Heart left ventricle (tissue), 16 donors: ENCODE measurements at regions of chr16 and their contacts with region 1.

Region 1: GRCh38 chr16:19555162-19555937 is at the start of gene VPS35L:
- DNase-seq: peak; percentile 98 to 99 (median 98)
- ATAC-seq: peak; percentile 99 to 100 (median 100)
- H3K4me3 ChIP-seq: peak within 1 kb of the TSS; percentile 58 to 95 (median 72)
- H3K27ac ChIP-seq: peak within 1 kb of the TSS; percentile 52 to 91 (median 86)
- H3K4me1 ChIP-seq: peaks cover 0 to 15% (median 8%) of the 10 kb centered on the region in 12 donors
- H3K27me3 ChIP-seq: no peaks in the 10 kb centered on the region
- CTCF ChIP-seq: peak; percentile 57 to 86 (median 78)
- POLR2A ChIP-seq: peak in 1 of 2 donors; percentile 66
- total RNA-seq, gene VPS35L: 20.6 to 47.3 (median 27.0) TPM

Region 2: GRCh38 chr16:19307587-19308241 is 247.6 kb before region 1 on chr16:
- intact Hi-C with region 1: no loop called
- DNase-seq: no peak
- ATAC-seq: no peak
- H3K4me3 ChIP-seq: no peak overlapping the region
- H3K27ac ChIP-seq: no peak overlapping the region
- H3K4me1 ChIP-seq: no peaks in the 10 kb centered on the region
- H3K27me3 ChIP-seq: peaks cover 0 to 9% (median 0%) of the 10 kb centered on the region in 9 donors
- CTCF ChIP-seq: no peak
- POLR2A ChIP-seq: no peak

Region 3: DNA sequence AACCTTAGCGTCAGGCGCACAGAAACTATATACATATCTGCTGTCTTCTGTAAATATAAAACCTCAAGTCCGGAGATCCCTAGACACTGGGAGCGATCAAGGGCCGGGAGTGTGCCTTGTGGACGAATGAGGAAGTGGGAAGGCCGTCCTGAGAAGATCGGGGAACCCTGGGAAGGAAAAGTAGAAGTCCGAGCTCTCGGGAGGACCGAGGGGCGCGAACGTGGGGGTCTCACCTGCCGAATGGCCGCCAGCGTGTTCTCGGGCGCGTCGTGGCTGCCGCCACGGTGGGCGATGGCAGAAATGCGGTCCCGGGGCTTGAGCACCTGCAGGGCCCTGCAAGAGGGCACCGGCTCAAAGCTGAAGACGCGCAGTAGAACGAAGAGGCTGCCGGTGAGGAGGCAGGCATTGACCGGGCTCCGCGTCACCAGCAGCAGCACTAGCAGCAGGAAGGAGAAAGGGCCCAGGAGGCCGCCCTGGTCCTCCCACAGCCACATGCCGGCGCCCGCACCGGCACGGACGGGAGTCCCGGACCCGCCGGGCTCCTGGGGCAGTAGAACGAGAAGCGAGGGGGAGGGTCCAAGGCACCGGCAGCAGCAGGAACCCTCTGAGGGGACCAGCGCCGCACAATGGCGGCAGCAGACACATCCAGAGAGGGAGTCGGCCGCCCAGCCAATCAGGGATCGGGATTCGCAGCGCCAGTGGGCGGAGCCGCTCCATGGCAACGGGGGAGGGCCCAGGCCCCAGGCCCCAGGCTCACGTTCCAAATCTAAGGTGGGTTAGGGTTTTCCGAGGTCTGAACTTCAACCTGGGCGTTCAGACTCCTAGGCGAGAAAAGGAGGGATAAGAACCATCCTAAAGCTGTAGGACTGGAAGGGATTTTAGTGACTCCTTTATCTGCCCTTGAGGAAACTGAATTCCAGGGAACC is 33.6 kb before region 1 on chr16 and contains the start of gene GDE1:
- intact Hi-C with region 1: loop called in 2 of 10 experiments (anchors 2 to 5 kb)
- DNase-seq: peak; percentile 96 to 97 (median 96)
- ATAC-seq: peak; percentile 88 to 95 (median 92)
- H3K4me3 ChIP-seq: peak within 1 kb of the TSS; percentile 60 to 95 (median 80)
- H3K27ac ChIP-seq: peak within 1 kb of the TSS; percentile 20 to 95 (median 87)
- H3K4me1 ChIP-seq: peaks cover 4 to 69% (median 37%) of the 10 kb centered on the region in 12 donors
- H3K27me3 ChIP-seq: no peaks in the 10 kb centered on the region
- CTCF ChIP-seq: peak in 7 of 12 donors; percentile 17 to 66 (median 43)
- POLR2A ChIP-seq: peak; percentile 42 to 95
- total RNA-seq, gene GDE1: 77.7 to 134 (median 109) TPM

Region 4: GRCh38 chr16:19639986-19640421 is 84.7 kb after region 1 on chr16:
- intact Hi-C with region 1: loop called in 1 of 10 experiments (anchors 10 kb)
- DNase-seq: no peak
- ATAC-seq: peak in 3 of 4 donors; percentile 32 to 49 (median 42)
- H3K4me3 ChIP-seq: no peak overlapping the region
- H3K27ac ChIP-seq: peak overlapping the region in 5 of 12 donors; percentile 16 to 54 (median 26)
- H3K4me1 ChIP-seq: peaks cover 0 to 26% (median 12%) of the 10 kb centered on the region in 12 donors
- H3K27me3 ChIP-seq: no peaks in the 10 kb centered on the region
- CTCF ChIP-seq: no peak
- POLR2A ChIP-seq: no peak

Region 5: GRCh38 chr16:19717771-19718602 is 162.6 kb after region 1 on chr16 and contains the starts of genes IQCK and KNOP1:
- intact Hi-C with region 1: loop called in 1 of 10 experiments (anchors 10 kb)
- DNase-seq: peak; percentile 92 to 94 (median 93)
- ATAC-seq: peak; percentile 93 to 98 (median 98)
- H3K4me3 ChIP-seq: peak within 1 kb of the TSS; percentile 67 to 99 (median 87)
- H3K27ac ChIP-seq: peak within 1 kb of the TSS in 11 of 12 donors; percentile 75 to 94 (median 85)
- H3K4me1 ChIP-seq: peaks cover 0 to 44% (median 35%) of the 10 kb centered on the region in 12 donors
- H3K27me3 ChIP-seq: no peaks in the 10 kb centered on the region
- CTCF ChIP-seq: peak in 2 of 12 donors; percentile 18 to 19
- POLR2A ChIP-seq: peak in 1 of 2 donors; percentile 67
- total RNA-seq, gene IQCK: 5.7 to 17.4 (median 9.0) TPM
- total RNA-seq, gene KNOP1: 6.3 to 11.5 (median 7.9) TPM

Region 6: DNA sequence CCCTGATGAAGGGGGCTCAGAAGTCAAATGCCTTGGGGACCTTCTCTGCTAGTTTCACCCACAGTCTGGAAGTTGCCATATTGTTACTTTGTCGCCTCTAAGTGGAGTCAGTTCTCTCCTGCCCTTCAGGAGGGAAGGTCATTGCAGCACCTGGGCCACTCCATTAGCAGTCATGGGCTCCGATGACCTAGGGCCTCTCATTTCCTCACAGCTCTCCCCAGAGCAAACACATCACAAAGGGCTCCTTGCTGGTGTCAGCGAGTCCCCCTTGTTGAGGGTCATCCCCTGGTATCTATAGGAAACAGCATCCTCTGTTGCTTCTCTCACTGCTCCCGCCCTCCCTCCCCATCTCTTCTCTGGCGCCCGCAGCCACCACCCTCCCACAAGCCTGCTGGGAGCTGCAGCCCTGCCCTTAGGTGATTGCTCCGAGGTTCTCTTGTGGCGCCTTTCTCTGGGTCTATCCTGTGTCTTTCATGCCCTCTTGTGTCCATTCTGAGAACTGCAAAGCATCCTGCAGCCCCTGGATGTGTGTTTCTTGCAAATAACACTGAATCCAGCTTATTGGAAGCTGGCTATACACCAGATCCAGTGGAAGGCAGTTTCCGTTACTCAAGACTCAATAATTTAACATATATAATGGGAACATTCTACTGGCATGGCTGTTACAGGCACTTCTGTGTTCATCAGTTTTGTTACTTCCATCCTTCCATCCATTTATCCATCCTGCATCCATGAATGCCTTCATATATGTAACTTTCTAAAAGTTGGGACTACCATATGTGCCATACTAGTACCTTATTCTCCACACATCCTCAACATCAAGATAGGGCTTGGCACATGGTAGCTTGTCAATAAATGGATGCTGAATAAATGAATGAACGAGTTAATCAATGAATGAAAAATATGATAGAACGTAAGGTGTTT is 828.0 kb after region 1 on chr16:
- intact Hi-C with region 1: loop called in 1 of 10 experiments (anchors 5 kb)
- DNase-seq: peak in 3 of 5 donors; percentile 35 to 48 (median 43)
- ATAC-seq: peak in 3 of 4 donors; percentile 69 to 80 (median 76)
- H3K4me3 ChIP-seq: no peak overlapping the region
- H3K27ac ChIP-seq: no peak overlapping the region
- H3K4me1 ChIP-seq: peaks cover 0 to 5% (median 0%) of the 10 kb centered on the region in 12 donors
- H3K27me3 ChIP-seq: peaks cover 0 to 14% (median 0%) of the 10 kb centered on the region in 9 donors
- CTCF ChIP-seq: peak; percentile 71 to 83 (median 74)
- POLR2A ChIP-seq: no peak